OCI-LY7 (cell line): ENCODE measurements at regions of chr13 and their contacts with region 1.

Region 1: GRCh38 chr13:33761740-33762139 is 56.2 kb upstream of the RFC3 start:
- DNase-seq: peak; percentile 57
- H3K4me3 ChIP-seq: no peak overlapping the region
- H3K27ac ChIP-seq: peak overlapping the region; percentile 47
- H3K4me1 ChIP-seq: peaks cover 27% of the 10 kb centered on the region
- CTCF ChIP-seq: peak; percentile 66

Region 2: DNA sequence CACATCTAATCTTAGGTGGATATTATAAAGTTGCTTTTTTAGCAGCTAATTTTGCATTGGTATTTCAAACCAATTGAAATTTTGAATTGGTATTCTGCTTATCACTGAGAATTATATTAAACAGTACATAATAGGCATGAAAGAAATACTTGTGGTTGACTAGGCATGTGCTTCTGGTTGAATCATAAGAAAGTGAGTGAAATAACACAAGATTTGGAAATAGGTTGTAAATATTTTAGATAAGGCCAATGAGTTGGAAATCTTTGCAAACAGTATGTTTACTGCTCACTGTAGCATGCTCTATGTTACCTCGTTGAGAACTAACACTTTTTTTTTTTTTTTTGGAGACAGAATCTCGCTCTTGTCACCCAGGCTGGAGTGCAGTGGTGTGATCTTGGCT is 10.6 kb before region 1 on chr13:
- CTCF ChIA-PET with region 1: interaction called, 3 read pairs
- POLR2A ChIA-PET with region 1: interaction called, 14 read pairs
- intact Hi-C with region 1: no loop called
- DNase-seq: no peak
- H3K4me3 ChIP-seq: no peak overlapping the region
- H3K27ac ChIP-seq: no peak overlapping the region
- H3K4me1 ChIP-seq: peaks cover 22% of the 10 kb centered on the region
- CTCF ChIP-seq: no peak

Region 3: GRCh38 chr13:33775339-33776108 is 13.8 kb after region 1 on chr13:
- CTCF ChIA-PET with region 1: interaction called, 4 read pairs
- POLR2A ChIA-PET with region 1: interaction called, 29 read pairs
- intact Hi-C with region 1: no loop called
- DNase-seq: no peak
- H3K4me3 ChIP-seq: no peak overlapping the region
- H3K27ac ChIP-seq: no peak overlapping the region
- H3K4me1 ChIP-seq: peaks cover 31% of the 10 kb centered on the region
- CTCF ChIP-seq: no peak

Region 4: GRCh38 chr13:33828431-33829129 is 66.8 kb after region 1 on chr13:
- CTCF ChIA-PET with region 1: no interaction called
- POLR2A ChIA-PET with region 1: no interaction called
- intact Hi-C with region 1: no loop called
- DNase-seq: no peak
- H3K4me3 ChIP-seq: no peak overlapping the region
- H3K27ac ChIP-seq: no peak overlapping the region
- H3K4me1 ChIP-seq: peaks cover 3% of the 10 kb centered on the region
- CTCF ChIP-seq: no peak